ENCODE measurements at regions of chr1 and their contacts with region 1.

Region 1: DNA sequence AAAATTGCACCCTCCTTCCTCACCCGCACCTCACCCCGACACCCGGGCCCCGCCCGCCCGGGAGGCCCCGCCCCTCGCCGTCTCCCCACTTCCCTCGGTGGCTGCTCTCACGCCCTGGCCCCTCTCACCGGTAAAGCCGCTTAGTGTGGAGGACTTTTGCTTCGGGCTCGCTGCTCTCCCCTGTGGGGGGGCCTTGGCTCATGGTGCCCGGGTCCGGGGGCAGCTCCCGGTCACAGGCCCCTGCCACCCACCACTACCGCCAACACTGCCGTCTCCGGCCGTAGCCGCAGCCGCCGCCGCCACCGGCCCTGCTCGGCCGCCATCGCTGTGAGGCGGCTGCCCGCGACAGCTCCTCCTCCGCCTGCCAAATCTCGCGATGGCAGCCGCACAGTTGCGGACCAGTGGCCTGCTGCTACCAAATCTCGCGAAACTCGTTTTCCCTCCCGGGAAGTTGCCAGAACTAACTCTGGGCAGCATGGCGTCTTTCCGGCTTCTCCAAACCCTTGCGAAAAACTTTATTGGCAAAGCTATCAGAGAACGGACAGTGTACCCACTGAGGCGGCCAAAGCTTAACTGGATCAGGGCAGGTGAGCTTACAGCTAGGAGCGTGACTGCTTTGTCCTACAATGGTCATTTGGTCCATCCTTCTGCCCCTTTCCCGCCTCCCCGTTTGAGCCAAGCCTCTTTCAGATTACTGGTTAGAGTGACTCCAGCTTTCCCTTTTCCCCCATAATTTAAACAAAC is at the start of gene SMG5:
- DNase-seq: peak; percentile 98
- ATAC-seq: peak; percentile 92
- H3K4me3 Mint-ChIP-seq: peak within 1 kb of the TSS; percentile 96
- H3K27ac Mint-ChIP-seq: peak within 1 kb of the TSS; percentile 92
- H3K4me1 Mint-ChIP-seq: peaks cover 29% of the 10 kb centered on the region
- H3K27me3 Mint-ChIP-seq: no peaks in the 10 kb centered on the region
- total RNA-seq, gene SMG5: 61.7 to 64.6 TPM

Region 2: DNA sequence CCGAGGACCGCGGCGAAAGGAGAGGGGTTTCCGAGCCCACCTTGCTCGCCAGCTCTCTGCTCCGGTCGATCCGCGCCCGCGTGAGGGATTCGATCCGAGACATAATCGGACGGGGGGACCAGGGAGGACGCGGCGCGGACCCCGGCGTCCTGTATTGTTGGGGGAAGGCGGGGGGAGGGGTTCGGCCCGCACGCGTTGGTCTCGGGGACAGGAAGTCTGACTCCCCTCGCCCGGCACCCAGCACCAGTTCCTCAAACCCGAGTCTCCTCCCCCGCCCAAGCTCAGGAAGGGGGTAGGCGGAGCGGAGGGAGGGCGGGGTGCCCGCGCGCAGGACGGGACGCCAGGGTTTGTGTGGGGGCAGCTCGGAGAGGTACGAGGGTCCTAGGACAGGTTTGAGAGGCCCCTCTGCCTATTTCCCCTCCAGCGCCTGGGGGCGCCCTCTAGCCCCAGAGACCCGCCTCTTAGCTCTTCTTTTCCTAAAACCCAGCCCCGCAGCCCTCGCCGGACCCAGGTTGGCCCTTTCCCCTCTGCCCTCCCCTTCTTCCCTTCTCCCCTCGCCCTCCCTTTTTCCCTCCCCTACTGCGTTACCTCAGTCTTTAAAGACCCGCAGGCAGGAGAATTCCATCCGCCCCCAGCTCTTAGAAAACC is 304.2 kb before region 1 on chr1 and contains the start of gene ARHGEF2:
- CTCF ChIA-PET with region 1: no interaction called
- POLR2A ChIA-PET with region 1: no interaction called
- intact Hi-C with region 1: loop called in 1 of 2 experiments (anchors 2 kb)
- DNase-seq: peak; percentile 88
- ATAC-seq: peak; percentile 57
- H3K4me3 Mint-ChIP-seq: peak within 1 kb of the TSS; percentile 100
- H3K27ac Mint-ChIP-seq: peak within 1 kb of the TSS; percentile 96
- H3K4me1 Mint-ChIP-seq: peaks cover 68% of the 10 kb centered on the region
- H3K27me3 Mint-ChIP-seq: no peaks in the 10 kb centered on the region
- total RNA-seq, gene ARHGEF2: 135 to 216 TPM

Region 3: DNA sequence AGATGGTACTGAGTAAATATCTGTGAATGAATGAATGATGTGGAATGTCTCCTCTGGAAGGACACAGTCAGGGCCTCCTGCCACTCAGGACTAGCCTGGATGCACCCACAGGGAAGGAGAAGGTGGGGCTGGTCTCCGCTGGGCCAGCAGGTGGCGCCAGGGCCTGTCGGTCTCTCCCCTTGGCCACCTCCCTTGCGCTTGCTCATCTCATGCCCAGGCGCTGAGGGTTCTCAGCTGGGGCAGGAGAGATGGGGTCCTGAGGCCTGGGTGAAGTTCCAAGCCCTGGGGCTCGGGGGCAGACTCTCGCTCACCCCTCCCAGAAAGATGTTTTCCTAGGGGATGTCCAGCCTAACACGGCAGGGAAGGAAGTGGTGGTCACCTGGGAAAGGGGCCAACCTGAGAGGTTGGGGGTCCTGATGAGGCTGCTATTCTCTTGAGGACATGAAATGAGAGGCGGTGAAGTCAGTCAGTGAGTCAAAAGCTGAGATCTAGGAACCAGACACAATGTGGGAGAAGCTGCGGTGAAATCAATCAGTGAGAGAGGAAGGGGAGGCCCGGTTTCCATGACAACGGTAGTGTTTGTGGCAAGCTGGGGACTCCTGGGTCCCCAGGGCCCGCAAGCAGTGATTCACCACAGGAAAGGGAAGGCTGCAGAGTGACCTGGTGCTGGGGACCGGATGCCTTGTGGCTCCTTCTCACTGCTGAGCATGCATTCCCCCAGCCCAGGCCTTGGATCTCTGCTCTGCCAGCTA is 185.8 kb before region 1 on chr1:
- CTCF ChIA-PET with region 1: interaction called, 4 read pairs
- POLR2A ChIA-PET with region 1: no interaction called
- intact Hi-C with region 1: loop called in 1 of 2 experiments (anchors 1 kb)
- DNase-seq: peak; percentile 96
- ATAC-seq: peak; percentile 76
- H3K4me3 Mint-ChIP-seq: peak overlapping the region; percentile 60
- H3K27ac Mint-ChIP-seq: peak overlapping the region; percentile 94
- H3K4me1 Mint-ChIP-seq: peaks cover 58% of the 10 kb centered on the region
- H3K27me3 Mint-ChIP-seq: peaks cover 7% of the 10 kb centered on the region

Region 4: GRCh38 chr1:156212833-156213643 is 69.6 kb before region 1 on chr1 and contains the start of gene PMF1:
- CTCF ChIA-PET with region 1: interaction called, 5 read pairs
- POLR2A ChIA-PET with region 1: interaction called, 6 read pairs
- intact Hi-C with region 1: loop called in 1 of 2 experiments (anchors 1 kb)
- DNase-seq: peak; percentile 98
- ATAC-seq: peak; percentile 90
- H3K4me3 Mint-ChIP-seq: peak within 1 kb of the TSS; percentile 76
- H3K27ac Mint-ChIP-seq: peak within 1 kb of the TSS; percentile 98
- H3K4me1 Mint-ChIP-seq: peaks cover 41% of the 10 kb centered on the region
- H3K27me3 Mint-ChIP-seq: no peaks in the 10 kb centered on the region
- total RNA-seq, gene PMF1: 108 to 117 TPM

Region 5: GRCh38 chr1:156252769-156253168 is 29.9 kb before region 1 on chr1:
- CTCF ChIA-PET with region 1: no interaction called
- POLR2A ChIA-PET with region 1: no interaction called
- intact Hi-C with region 1: no loop called
- DNase-seq: no peak
- ATAC-seq: no peak
- H3K4me3 Mint-ChIP-seq: no peak overlapping the region
- H3K27ac Mint-ChIP-seq: no peak overlapping the region
- H3K4me1 Mint-ChIP-seq: no peaks in the 10 kb centered on the region
- H3K27me3 Mint-ChIP-seq: no peaks in the 10 kb centered on the region

Region 6: DNA sequence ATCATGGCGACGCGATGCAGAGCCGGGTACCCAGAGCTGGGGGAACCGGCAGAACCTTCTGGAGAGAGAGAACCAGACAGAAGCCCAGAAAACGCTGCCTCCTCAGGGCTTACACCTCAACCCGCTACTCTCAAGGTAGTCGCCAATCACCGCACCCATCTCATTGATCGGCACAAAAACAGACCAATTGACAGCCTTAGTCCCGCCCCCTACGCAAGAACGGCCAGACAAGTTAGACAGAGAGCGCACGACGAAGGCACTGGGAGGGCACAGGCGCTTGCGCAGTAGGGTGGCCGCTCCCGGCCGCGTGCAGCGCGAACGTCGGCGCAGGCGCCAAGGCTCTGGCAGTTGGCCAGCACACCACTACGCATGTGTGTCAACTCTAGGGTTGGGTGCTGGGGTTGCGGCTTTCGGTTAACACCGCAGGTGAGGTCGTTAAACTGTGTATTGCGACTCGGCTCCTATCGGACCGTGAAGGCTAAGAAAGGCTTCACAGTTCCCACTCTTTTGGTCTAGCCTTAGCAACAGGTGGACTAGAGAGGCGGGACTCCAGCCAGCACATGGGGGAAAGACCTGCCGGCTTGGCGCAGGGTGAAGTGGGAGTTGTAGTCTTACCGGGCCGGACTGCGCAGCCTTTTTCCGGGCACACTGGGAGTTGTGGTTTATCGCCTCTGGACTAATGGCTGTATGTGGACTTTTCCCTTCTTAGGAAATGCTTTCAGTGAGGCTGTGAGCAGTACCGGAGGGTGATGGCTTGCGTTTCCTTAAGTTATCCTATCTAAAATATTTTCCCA is 55.7 kb after region 1 on chr1 and contains the starts of genes CCT3 and TSACC:
- CTCF ChIA-PET with region 1: interaction called, 4 read pairs
- POLR2A ChIA-PET with region 1: interaction called, 3 read pairs
- intact Hi-C with region 1: loop called (anchors 1 kb)
- DNase-seq: peak; percentile 99
- ATAC-seq: peak; percentile 96
- H3K4me3 Mint-ChIP-seq: peak within 1 kb of the TSS; percentile 98
- H3K27ac Mint-ChIP-seq: peak within 1 kb of the TSS; percentile 96
- H3K4me1 Mint-ChIP-seq: peaks cover 29% of the 10 kb centered on the region
- H3K27me3 Mint-ChIP-seq: no peaks in the 10 kb centered on the region
- total RNA-seq, gene CCT3: 297 to 406 TPM
- total RNA-seq, gene TSACC: 0.25 to 0.83 TPM

Region 7: DNA sequence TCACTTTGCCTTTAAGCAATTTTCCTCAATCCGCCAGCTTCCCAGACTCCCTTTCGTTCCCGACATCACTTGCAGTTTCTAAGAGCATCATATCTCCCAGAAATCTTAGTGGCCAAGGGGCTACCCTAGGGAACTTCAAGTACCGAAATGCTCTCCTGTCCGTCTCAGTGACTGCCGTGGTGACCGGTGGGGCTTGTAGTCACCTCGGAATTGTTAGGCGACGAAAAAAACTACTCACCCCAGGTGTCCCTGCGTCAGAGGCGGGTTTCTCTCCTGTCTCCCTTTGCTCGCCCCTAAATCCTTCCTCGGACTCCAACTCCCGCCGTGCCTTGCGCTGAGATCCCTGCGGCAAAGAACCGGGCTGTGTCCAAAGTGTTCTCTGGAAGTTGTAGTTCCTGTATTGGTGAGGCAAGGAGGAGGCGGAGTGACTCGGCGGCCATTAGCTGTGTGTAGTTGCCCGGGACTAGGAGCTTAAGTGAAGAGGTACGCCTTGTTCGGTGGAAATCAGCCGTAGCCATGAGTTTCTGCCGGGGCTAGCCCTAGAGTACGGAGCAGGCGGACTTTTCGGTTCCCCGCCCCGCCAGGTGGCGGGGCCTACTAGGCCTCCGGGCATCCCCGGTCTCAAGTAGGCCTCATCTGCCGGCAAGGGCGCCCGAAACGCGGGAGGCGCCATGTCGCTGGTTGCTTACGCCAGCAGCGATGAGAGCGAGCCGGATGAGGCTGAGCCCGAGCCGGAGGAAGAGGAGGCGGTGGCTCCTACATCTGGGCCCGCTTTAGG is 484.6 kb after region 1 on chr1 and contains the start of gene PRCC:
- CTCF ChIA-PET with region 1: no interaction called
- POLR2A ChIA-PET with region 1: no interaction called
- intact Hi-C with region 1: loop called in 1 of 2 experiments (anchors 2 kb)
- DNase-seq: peak; percentile 98
- ATAC-seq: peak; percentile 96
- H3K4me3 Mint-ChIP-seq: no peak within 1 kb of the TSS
- H3K27ac Mint-ChIP-seq: no peak within 1 kb of the TSS
- H3K4me1 Mint-ChIP-seq: peaks cover 35% of the 10 kb centered on the region
- H3K27me3 Mint-ChIP-seq: no peaks in the 10 kb centered on the region
- total RNA-seq, gene PRCC: 80.4 to 110 TPM

Measured in activated CD4-positive, alpha-beta T cell treated with anti-CD3 and anti-CD28 coated beads for 36 hours (primary cell).